ENCODE measurements at regions of chr6 and their contacts with region 1.

Region 1: GRCh38 chr6:26596579-26597388 is at the start of gene ABT1:
- DNase-seq: peak; percentile 96
- H3K4me3 Mint-ChIP-seq: no peak within 1 kb of the TSS
- H3K27ac Mint-ChIP-seq: no peak within 1 kb of the TSS
- H3K4me1 Mint-ChIP-seq: peaks cover 28% of the 10 kb centered on the region
- H3K27me3 Mint-ChIP-seq: peaks cover 27% of the 10 kb centered on the region
- total RNA-seq, gene ABT1: 28.2 and 29.9 TPM in 2 replicates

Region 2: DNA sequence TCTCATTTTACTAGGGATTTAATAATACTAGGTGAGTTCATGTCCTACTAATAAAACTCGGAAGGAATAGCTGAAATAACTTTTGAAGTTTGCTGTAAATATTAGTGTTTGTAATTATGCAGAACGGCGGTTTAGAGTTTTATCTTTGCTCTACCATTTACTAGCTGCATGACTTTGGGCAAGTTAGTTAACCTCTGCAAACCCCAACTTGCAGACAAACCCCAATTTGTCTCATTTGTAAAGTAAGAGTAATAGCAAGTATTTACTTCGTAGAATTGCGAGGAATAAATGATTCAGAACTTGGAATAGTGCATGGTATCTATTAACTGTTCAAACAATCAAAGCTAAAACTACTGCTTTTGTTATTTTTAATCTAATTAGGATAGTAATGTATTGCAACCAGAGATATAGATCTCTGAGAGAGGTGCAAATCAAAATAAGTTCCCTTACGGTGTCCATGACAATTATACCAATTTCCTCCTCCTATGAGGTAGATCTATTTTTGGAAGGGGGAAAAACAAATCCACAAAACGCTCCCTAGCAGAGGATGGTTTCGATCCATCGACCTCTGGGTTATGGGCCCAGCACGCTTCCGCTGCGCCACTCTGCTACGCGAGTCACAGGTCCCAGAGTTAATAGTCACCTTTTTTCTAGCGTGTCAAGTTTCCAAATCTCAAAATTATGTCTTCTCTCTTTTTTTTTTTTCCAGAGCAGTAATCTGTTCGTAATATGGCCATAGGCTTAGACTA is 266.8 kb before region 1 on chr6:
- intact Hi-C with region 1: loop called (anchors 2 kb)
- DNase-seq: peak; percentile 55
- H3K4me3 Mint-ChIP-seq: peak overlapping the region; percentile 84
- H3K27ac Mint-ChIP-seq: peak overlapping the region; percentile 43
- H3K4me1 Mint-ChIP-seq: peaks cover 48% of the 10 kb centered on the region
- H3K27me3 Mint-ChIP-seq: peaks cover 16% of the 10 kb centered on the region

Region 3: GRCh38 chr6:26568601-26569432 is 28.0 kb before region 1 on chr6:
- intact Hi-C with region 1: loop called (anchors 1 kb)
- DNase-seq: peak; percentile 95
- H3K4me3 Mint-ChIP-seq: peak overlapping the region; percentile 93
- H3K27ac Mint-ChIP-seq: peak overlapping the region; percentile 78
- H3K4me1 Mint-ChIP-seq: peaks cover 32% of the 10 kb centered on the region
- H3K27me3 Mint-ChIP-seq: no peaks in the 10 kb centered on the region

Region 4: DNA sequence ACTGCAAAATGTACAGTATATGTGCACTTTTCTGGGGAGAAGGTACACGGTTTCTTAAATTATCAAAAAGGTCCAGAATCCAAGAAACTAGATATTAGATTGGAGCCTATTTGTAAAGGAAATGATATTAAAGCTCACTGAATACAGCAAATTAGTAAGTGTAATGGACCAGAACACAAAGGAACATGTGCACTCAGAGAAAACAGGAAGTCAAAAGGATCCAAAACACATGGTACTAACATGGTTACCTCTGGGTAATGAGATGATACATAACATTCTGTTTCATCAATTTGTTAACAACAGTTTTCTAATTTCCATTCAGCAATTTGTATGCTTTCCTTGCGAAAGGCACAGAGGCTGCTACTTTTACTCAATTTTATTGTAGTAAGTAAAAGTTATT is 44.0 kb after region 1 on chr6:
- intact Hi-C with region 1: no loop called
- DNase-seq: no peak
- H3K4me3 Mint-ChIP-seq: no peak overlapping the region
- H3K27ac Mint-ChIP-seq: no peak overlapping the region
- H3K4me1 Mint-ChIP-seq: no peaks in the 10 kb centered on the region
- H3K27me3 Mint-ChIP-seq: no peaks in the 10 kb centered on the region

Region 5: DNA sequence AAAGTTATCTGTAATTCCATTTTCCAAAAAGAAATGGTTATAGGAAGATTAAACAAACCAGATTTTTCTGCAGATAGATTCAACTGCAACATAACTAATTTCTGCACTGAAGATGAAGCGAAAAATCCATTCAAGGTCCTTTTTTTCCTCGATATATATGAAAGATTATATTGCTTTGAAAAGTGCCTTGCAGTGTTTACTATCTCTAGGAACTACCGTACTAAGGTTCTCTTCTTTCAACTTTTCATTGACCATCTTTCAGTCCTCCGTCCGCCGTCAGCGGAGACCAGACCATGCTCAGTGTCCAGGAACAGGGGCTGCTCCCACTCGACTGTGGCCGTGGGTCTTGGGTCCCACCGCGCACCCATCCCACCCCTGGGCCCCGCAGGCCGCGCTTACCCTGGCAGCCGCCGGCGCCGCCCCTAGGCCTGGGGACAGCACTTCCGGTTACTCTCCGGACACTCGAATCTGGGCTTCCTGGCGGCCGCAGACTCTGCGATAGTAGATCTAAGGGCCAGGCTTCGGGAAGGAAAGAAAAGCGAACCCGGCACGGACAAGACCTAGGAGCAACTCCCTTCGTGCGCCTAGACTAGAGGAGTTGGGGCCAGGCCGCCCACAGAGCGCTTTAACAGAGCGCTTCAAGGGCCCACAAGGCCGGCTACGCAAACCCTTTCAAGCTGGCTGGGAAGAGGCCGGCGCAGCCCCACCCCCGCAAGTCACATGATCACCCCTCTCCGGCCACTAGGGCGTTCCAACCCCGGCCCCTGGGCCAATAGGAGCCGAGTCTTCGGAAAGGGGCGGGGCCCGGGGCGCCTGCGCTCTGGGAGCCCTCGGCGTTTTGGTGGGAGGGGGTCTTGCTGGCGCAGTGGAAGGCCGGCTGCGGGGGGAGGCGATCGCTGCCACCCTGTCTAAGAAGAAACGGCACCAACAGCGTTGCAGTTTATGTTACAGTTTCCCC is 62.5 kb after region 1 on chr6 and contains the start of gene ZNF322:
- intact Hi-C with region 1: loop called (anchors 2 kb)
- DNase-seq: peak; percentile 86
- H3K4me3 Mint-ChIP-seq: peak within 1 kb of the TSS; percentile 80
- H3K27ac Mint-ChIP-seq: peak within 1 kb of the TSS; percentile 63
- H3K4me1 Mint-ChIP-seq: peaks cover 25% of the 10 kb centered on the region
- H3K27me3 Mint-ChIP-seq: peaks cover 16% of the 10 kb centered on the region
- total RNA-seq, gene ZNF322: 10.4 and 11.3 TPM in 2 replicates